ENCODE measurements at regions of chr5 and their contacts with region 1.

Region 1: GRCh38 chr5:669111-669875 is 23.9 kb downstream of the TPPP start:
- H3K4me3 Mint-ChIP-seq: no peak overlapping the region
- H3K27ac Mint-ChIP-seq: no peak overlapping the region
- H3K4me1 Mint-ChIP-seq: peaks cover 5% of the 10 kb centered on the region
- H3K27me3 Mint-ChIP-seq: peaks cover 45% of the 10 kb centered on the region

Region 2: GRCh38 chr5:543825-544674 is 125.2 kb before region 1 on chr5:
- intact Hi-C with region 1: no loop called
- H3K4me3 Mint-ChIP-seq: no peak overlapping the region
- H3K27ac Mint-ChIP-seq: no peak overlapping the region
- H3K4me1 Mint-ChIP-seq: peaks cover 47% of the 10 kb centered on the region
- H3K27me3 Mint-ChIP-seq: peaks cover 86% of the 10 kb centered on the region

Region 3: GRCh38 chr5:892394-893136 is 223.3 kb after region 1 on chr5 and contains the starts of genes BRD9 and TRIP13:
- intact Hi-C with region 1: loop called (anchors 5 kb)
- H3K4me3 Mint-ChIP-seq: peak within 1 kb of the TSS; percentile 71
- H3K27ac Mint-ChIP-seq: peak within 1 kb of the TSS; percentile 87
- H3K4me1 Mint-ChIP-seq: peaks cover 17% of the 10 kb centered on the region
- H3K27me3 Mint-ChIP-seq: no peaks in the 10 kb centered on the region